Prostate gland (tissue), 2 donors: ENCODE measurements at regions of chr13 and their contacts with region 1.

Region 1: GRCh38 chr13:27270594-27271520 is at the start of gene RASL11A:
- DNase-seq: peak; percentile 77
- H3K4me3 ChIP-seq: peak within 1 kb of the TSS; percentile 50 to 63
- H3K27ac ChIP-seq: peak within 1 kb of the TSS; percentile 78 to 84
- H3K4me1 ChIP-seq: peaks cover 2% of the 10 kb centered on the region
- H3K27me3 ChIP-seq: no peaks in the 10 kb centered on the region
- CTCF ChIP-seq: peak; percentile 75 to 92 (median 78)
- POLR2A ChIP-seq: peak; percentile 81
- total RNA-seq, gene RASL11A: 26.5 to 31.5 TPM

Region 2: GRCh38 chr13:26985285-26985878 is 285.5 kb before region 1 on chr13:
- intact Hi-C with region 1: loop called (anchors 5 kb)
- DNase-seq: peak; percentile 81
- H3K4me3 ChIP-seq: no peak overlapping the region
- H3K27ac ChIP-seq: no peak overlapping the region
- H3K4me1 ChIP-seq: peaks cover 4% of the 10 kb centered on the region
- H3K27me3 ChIP-seq: no peaks in the 10 kb centered on the region
- CTCF ChIP-seq: peak; percentile 40 to 85 (median 82)
- POLR2A ChIP-seq: no peak

Region 3: DNA sequence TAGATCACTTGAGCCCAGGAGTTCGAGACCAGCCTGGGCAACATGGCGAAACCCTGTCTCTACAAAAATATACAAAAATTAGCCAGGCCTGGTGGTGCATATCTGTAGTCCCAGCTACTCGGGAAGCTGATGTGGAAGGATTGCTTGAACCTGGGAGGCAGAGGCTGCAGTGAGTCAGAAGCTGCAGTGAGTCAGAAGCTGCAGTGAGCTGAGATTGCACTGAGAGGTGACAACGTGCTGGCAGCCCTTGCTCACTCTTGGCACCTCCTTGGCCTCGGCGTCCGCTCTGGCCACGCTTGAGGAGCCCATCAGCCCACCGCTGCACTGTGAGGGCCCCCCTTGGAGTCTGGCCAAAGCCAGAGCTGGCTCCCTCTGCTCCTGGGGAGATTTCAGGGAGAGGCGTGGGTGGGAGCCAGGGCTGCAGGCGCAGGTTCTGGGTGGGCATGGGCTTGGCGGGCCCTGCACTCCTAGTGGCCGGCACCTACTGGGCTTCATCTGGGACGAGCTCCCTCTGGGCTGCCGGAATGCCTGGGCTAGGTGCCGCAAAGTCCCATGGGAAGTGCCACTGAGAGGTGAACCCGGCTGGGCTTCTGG is 59.0 kb before region 1 on chr13:
- intact Hi-C with region 1: no loop called
- DNase-seq: no peak
- H3K4me3 ChIP-seq: no peak overlapping the region
- H3K27ac ChIP-seq: no peak overlapping the region
- H3K4me1 ChIP-seq: no peaks in the 10 kb centered on the region
- H3K27me3 ChIP-seq: no peaks in the 10 kb centered on the region
- CTCF ChIP-seq: no peak
- POLR2A ChIP-seq: no peak

Region 4: GRCh38 chr13:27251166-27252091 is 19.4 kb before region 1 on chr13 and contains the start of gene RPL21:
- intact Hi-C with region 1: loop called (anchors 2 kb)
- DNase-seq: peak; percentile 93
- H3K4me3 ChIP-seq: peak within 1 kb of the TSS; percentile 79 to 82
- H3K27ac ChIP-seq: peak within 1 kb of the TSS; percentile 93 to 96
- H3K4me1 ChIP-seq: peaks cover 3% of the 10 kb centered on the region
- H3K27me3 ChIP-seq: no peaks in the 10 kb centered on the region
- CTCF ChIP-seq: peak in 1 of 4 experiments; percentile 15
- POLR2A ChIP-seq: peak; percentile 57
- total RNA-seq, gene RPL21: 338 to 1,109 TPM

Region 5: GRCh38 chr13:27620377-27621115 is 349.7 kb after region 1 on chr13 and contains the start of gene LNX2:
- intact Hi-C with region 1: loop called (anchors 5 kb)
- DNase-seq: peak; percentile 99
- H3K4me3 ChIP-seq: peak within 1 kb of the TSS; percentile 96 to 97
- H3K27ac ChIP-seq: peak within 1 kb of the TSS; percentile 96 to 97
- H3K4me1 ChIP-seq: peaks cover 10% of the 10 kb centered on the region
- H3K27me3 ChIP-seq: no peaks in the 10 kb centered on the region
- CTCF ChIP-seq: no peak
- POLR2A ChIP-seq: peak; percentile 98
- total RNA-seq, gene LNX2: 26.3 to 34.1 TPM

Region 6: DNA sequence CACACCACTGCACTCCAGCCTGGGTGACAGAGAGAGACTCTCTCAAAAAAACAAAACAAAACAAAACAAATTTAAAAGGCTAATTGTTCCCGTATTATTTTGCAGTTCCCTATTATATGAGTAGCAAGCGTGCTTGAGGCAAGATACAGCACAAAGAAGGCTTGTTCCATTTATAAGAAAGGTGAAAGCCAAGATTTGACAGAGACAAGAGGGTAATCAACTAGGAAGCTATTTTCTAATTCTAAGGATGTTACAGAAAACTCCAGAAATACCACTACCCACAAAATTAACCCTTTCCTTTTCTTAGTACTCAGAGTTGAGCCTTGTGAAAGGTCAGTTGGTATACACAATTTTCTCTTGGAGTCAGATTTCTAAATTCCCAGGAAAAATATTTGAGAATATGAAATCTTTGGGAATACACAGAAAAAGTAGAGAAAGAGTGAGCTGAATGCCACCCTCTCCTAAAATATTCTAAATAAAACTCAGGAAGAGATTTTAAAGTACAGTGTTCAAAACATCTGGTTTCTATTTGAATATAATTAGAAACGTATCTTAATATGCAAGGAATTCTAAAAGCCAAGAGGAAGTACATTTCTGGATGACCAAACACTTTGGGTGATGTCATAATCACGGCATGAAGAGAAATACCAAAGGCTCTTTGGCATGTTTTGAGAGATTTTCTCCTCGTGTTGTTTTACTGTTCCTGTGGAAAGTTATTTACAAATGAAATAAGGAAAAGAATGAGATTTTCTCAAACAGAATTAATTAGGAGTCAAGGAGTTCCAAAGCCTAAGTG is 1287.1 kb after region 1 on chr13:
- intact Hi-C with region 1: no loop called
- DNase-seq: no peak
- H3K4me3 ChIP-seq: no peak overlapping the region
- H3K27ac ChIP-seq: no peak overlapping the region
- H3K4me1 ChIP-seq: no peaks in the 10 kb centered on the region
- H3K27me3 ChIP-seq: no peaks in the 10 kb centered on the region
- CTCF ChIP-seq: no peak
- POLR2A ChIP-seq: no peak